AG04449 (cell line): ENCODE measurements at regions of chr2 and their contacts with region 1.

Region 1: DNA sequence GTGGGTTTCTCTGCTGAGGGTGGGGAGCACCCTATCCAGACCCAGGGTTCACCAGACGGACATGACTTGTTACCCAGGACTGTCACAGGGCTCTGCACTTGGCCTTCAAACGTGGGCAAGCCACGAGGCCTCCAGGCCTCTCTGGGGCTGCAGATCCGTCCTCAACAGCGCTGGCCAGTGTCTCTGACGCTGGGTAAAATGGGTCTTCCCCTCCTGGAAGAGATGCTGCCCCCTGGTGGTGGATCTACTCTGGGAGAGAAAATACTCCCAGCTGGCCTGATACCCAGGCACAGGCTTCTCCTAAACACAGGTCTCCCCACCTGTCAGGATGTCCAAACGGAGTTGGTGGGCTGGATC is 3.7 kb downstream of the GPR17 start:
- DNase-seq: no peak
- H3K4me3 ChIP-seq: no peak overlapping the region
- CTCF ChIP-seq: peak; percentile 79

Region 2: DNA sequence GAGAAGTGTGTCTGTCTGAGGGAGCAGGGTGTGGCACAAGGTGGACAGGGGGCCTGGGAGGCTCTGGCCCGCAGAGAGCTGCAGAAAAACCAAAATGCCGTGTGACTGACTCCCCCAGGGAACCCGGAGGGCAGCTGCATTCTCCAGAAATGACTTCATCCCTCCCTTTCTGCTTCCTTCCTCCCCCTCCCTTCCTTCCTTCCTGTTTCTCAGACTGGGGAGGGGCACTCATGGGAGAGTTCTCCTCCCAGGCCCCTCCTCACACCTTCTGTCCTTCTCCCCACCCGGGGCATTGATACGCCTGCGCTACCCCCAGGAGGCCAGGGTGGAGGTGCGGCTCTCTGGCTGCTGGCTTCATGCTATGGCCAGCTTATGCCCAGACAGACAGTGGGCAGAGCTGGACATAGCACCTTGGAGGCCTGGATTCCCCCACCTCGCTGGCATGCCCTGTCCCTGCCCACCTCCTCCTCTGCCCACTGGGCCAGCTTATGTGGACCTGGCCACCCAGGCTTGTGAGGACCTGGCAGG is 11.9 kb before region 1 on chr2:
- CTCF ChIA-PET with region 1: interaction called, 44 read pairs
- POLR2A ChIA-PET with region 1: interaction called, 3 read pairs
- DNase-seq: no peak
- H3K4me3 ChIP-seq: no peak overlapping the region
- CTCF ChIP-seq: no peak

Region 3: DNA sequence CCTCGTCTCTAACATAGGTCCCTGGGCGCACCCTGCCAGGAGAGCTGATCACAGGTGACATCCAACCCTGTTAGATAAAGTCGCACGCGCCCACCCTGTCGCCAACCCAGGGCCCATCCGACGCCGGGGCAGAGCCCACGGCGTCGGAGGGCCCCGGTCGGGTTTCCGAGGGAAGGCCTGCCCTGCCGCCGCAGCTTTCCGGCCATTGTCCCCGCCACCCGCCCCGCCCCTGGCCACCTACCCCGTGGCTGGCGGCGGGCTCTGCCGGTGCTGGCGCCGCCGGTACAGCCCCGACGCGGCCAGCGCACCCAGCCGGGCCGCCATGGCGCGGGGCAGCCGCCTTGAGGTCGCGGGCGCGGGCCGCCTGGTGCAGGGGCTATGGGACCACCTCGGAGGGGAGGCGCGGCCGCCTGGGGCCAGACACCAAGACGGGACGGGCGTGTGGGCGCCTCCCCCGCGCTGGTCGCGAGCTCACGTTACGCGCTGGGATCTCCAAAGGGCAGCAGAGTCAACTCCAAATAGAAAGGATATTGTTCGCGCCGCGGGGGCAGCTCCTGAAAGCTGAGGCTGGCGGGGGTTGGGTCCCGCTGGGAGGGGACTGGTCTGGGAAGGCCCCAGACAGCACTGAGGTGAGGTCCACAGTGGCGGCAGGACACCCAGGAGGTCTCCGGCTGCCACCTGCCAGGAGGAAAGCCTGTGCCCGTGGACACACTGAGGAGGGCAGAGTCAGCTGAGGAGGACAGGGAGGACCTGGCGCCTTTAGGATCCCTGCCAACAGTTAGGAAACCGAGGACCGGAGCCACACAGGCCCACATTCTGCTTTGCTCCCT is 14.6 kb after region 1 on chr2:
- CTCF ChIA-PET with region 1: interaction called, 21 read pairs
- POLR2A ChIA-PET with region 1: no interaction called
- DNase-seq: no peak
- H3K4me3 ChIP-seq: no peak overlapping the region
- CTCF ChIP-seq: no peak

Region 4: GRCh38 chr2:127770973-127771735 is 121.5 kb after region 1 on chr2:
- CTCF ChIA-PET with region 1: no interaction called
- POLR2A ChIA-PET with region 1: no interaction called
- DNase-seq: peak; percentile 68
- H3K4me3 ChIP-seq: no peak overlapping the region
- CTCF ChIP-seq: no peak